OCI-LY7 (cell line): ENCODE measurements at regions of chr12 and their contacts with region 1.

Region 1: GRCh38 chr12:86660488-86661171 is 404.4 kb upstream of the MGAT4C start:
- DNase-seq: no peak
- H3K4me3 ChIP-seq: no peak overlapping the region
- H3K27ac ChIP-seq: no peak overlapping the region
- H3K4me1 ChIP-seq: no peaks in the 10 kb centered on the region
- CTCF ChIP-seq: no peak

Region 2: DNA sequence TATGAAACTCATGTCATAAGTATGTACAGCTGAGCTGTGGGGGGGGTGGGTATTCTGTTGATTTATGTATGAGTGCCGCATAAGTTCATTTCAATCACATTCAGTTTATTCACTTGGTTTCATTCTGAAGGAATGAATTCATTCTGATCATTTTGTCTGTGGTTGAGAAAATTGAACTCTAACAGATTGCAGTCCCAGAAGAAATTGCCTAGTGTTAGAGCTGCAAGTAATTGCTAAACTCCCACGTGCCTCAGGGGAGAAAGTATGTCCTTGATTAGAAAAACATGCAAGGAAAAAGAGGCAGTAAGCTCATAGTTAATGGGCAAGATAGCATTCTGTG is 38.0 kb after region 1 on chr12:
- CTCF ChIA-PET with region 1: no interaction called
- POLR2A ChIA-PET with region 1: interaction called, 13 read pairs
- intact Hi-C with region 1: no loop called
- DNase-seq: no peak
- H3K4me3 ChIP-seq: no peak overlapping the region
- H3K27ac ChIP-seq: no peak overlapping the region
- H3K4me1 ChIP-seq: no peaks in the 10 kb centered on the region
- CTCF ChIP-seq: no peak